SK-N-SH (cell line): ENCODE measurements at regions of chr12 and their contacts with region 1.

Region 1: DNA sequence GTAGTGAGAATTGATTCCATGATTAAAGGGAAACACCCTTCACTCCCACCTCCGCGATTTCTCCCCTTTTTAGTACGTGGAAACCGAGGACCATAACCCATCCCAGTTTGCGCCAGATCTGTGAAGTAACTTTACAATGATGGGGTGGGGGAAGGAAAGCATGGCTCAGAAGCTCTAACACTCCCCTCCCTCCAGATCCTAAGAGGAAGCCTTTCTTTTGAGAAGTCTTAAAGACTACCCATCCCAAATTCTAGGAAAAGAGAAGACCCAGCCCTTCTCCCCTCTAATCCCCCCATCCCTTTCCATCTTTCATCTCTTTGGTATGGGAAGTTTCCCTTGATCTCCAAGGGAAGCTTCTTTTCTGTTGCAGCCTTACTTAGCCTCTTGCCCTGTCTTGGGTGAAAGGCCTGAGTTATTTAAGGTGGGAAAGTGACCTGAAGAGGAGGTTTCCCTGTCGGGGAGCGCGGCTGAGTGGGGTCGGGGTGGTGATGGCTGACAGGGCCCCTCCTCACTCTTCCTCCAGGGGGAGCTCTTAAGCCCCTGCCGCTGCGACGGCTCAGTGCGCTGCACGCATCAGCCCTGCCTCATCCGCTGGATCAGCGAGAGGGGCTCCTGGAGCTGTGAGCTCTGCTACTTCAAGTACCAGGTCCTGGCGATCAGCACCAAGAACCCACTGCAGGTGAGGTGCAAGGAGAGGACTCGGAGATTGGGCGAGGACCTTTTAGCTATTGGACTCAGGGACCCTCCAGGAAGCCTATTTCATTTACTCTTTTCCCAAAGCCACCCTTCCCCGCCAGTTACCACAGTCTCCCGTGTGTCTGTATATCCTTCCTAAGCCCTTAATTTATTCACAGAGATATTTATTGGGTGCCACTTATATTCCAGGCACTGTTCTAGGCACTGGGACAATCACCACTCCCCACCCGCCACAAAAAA is 1.8 kb downstream of the MARCHF9 start:
- DNase-seq: peak; percentile 82
- H3K4me3 ChIP-seq: peak overlapping the region; percentile 73 to 79
- H3K27ac ChIP-seq: no peak overlapping the region
- H3K4me1 ChIP-seq: peaks cover 8 to 27% of the 10 kb centered on the region in 2 experiments
- H3K27me3 ChIP-seq: no peaks in the 10 kb centered on the region
- CTCF ChIP-seq: peak; percentile 56
- EP300 ChIP-seq: no peak
- RAD21 ChIP-seq: 0 out of 2 replicates have a peak, but pooled peaks have one; percentile 3

Region 2: GRCh38 chr12:57735952-57736740 is 20.5 kb before region 1 on chr12:
- CTCF ChIA-PET with region 1: interaction called, 11 read pairs
- POLR2A ChIA-PET with region 1: interaction called, 3 read pairs
- DNase-seq: peak; percentile 87
- H3K4me3 ChIP-seq: peak overlapping the region; percentile 29 to 32; a peak in 3 of 4 replicates
- H3K27ac ChIP-seq: peak overlapping the region in 1 of 2 experiments; percentile 39; a peak in 1 of 4 replicates
- H3K4me1 ChIP-seq: peaks cover 0 to 29% of the 10 kb centered on the region in 2 experiments; a peak in 2 of 4 replicates
- H3K27me3 ChIP-seq: no peaks in the 10 kb centered on the region
- CTCF ChIP-seq: peak; percentile 53
- EP300 ChIP-seq: no peak
- RAD21 ChIP-seq: peak; percentile 69

Region 3: DNA sequence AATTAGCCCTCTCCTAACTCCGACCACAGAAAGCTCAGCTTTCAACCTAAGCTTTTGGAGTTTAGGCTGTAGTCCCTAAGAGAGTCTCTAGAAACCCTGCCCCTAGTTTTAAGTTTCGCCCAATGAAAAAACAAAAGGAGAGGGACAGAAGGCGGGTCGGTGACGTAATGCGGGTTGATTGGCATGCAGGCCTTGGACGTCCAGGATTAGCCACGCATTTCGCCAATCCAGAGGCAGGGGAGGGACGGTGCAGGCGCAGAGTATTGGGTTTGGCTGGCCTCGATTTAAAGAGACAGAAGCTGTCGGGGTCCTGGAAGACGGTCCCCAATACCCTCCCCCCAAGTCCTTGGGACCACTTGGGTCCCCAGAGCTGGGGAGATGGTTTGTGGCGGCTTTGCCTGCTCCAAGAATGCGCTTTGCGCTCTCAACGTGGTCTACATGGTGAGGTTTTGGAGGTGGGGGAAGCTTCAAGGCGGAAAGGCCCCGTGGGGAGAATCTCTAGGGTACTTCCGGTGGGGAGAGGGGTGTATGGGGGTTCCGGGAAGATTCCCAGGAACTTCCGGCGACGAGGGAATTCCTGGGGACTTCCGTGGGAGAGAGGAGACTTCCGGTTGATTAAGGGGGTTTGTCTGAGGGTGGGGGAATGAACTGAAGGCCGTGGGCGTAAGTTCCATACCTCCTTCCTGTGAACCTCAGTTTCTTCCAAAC is 11.7 kb before region 1 on chr12 and contains the start of gene TSPAN31:
- CTCF ChIA-PET with region 1: interaction called, 10 read pairs
- POLR2A ChIA-PET with region 1: interaction called, 3 read pairs
- DNase-seq: peak; percentile 86
- H3K4me3 ChIP-seq: peak within 1 kb of the TSS; percentile 81 to 82
- H3K27ac ChIP-seq: peak within 1 kb of the TSS; percentile 96 to 98
- H3K4me1 ChIP-seq: peaks cover 0 to 17% of the 10 kb centered on the region in 2 experiments; a peak in 2 of 4 replicates
- H3K27me3 ChIP-seq: no peaks in the 10 kb centered on the region
- CTCF ChIP-seq: no peak
- EP300 ChIP-seq: no peak
- RAD21 ChIP-seq: no peak
- polyA plus RNA-seq, gene TSPAN31: 36.8 and 42.8 TPM in 2 replicates

Region 4: DNA sequence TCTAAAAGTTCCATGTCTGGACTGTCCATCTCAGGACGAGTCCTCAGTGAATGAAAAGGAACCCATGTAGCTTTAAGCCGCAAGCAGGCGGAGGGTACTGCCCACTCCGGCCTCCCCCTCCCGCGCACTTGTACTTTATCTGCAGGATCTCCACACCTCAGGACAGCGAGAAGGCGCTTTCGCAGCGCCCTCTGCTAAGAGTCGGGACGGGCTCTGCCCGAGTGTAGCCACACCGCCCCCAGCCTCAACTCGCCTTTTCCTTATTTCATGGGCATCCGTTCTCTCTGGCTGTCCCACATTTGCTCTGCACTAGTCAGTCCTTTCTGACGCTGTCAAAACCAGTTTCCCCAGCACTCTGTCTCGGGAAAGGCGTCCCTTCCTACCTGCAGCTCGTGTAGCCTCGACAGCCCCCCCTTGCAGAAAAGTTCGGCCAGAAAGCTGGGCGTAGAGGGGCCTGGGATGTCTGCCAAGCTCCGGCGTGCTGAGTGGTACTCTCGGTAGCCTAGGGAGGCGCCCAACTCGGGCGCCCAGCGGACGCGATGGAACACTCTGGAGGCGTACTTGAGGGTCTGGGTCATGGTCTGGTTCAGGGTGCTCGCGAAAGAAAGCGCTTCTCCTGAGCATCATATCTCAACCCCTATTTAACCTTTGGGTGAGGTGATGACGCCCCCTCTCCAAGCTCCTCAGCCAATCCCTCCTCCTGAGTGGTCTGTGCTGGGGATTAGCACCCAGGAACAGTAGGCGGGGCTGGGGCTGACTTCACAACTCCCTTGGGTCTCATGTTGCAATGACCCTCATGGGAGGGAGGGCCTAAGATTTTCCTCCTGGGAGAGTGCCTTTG is 10.0 kb after region 1 on chr12 and contains the start of gene CYP27B1:
- CTCF ChIA-PET with region 1: interaction called, 27 read pairs
- POLR2A ChIA-PET with region 1: interaction called, 9 read pairs
- DNase-seq: peak; percentile 52
- H3K4me3 ChIP-seq: peak within 1 kb of the TSS in 1 of 2 experiments; percentile 21; a peak in 1 of 4 replicates
- H3K27ac ChIP-seq: no peak within 1 kb of the TSS
- H3K4me1 ChIP-seq: peaks cover 3 to 33% of the 10 kb centered on the region in 2 experiments; a peak in 1 of 4 replicates
- H3K27me3 ChIP-seq: no peaks in the 10 kb centered on the region; the same call in 1 of the 2 replicates
- CTCF ChIP-seq: no peak
- EP300 ChIP-seq: no peak
- RAD21 ChIP-seq: no peak
- polyA plus RNA-seq, gene CYP27B1: 1.7 and 2.3 TPM in 2 replicates